GM18951 (cell line): ENCODE measurements at regions of chr6 and their contacts with region 1.

Region 1: DNA sequence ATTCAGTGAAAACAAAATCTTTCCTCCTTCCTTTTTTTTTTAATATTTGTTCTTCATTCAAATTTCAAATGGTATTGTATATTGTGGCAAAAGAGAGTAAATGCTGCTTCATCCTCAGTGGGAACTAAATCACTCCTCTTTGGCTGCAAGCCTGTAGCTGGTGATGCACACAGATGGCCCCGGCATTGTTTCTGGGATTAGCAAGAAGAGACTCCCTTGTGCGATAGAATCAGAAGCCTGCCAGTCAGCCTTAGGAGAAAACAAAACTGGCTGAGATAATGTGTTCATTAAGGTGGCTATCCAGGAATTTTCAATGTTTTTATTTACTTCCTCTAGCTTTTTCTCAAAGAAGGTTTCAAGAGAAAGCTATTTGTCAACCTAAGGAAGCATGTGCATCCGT is 20.7 kb upstream of the ELOVL2 start:
- POLR2A ChIP-seq: no peak

Region 2: GRCh38 chr6:10847684-10848083 is 217.2 kb before region 1 on chr6:
- in situ Hi-C with region 1: loop called (anchors 10 kb)
- POLR2A ChIP-seq: no peak

Region 3: GRCh38 chr6:10954590-10955010 is 110.2 kb before region 1 on chr6:
- in situ Hi-C with region 1: loop called (anchors 10 kb)
- POLR2A ChIP-seq: no peak

Region 4: GRCh38 chr6:11665604-11666326 is 600.9 kb after region 1 on chr6:
- in situ Hi-C with region 1: no loop called
- POLR2A ChIP-seq: no peak

Region 5: GRCh38 chr6:11766589-11767450 is 702.0 kb after region 1 on chr6:
- in situ Hi-C with region 1: no loop called
- POLR2A ChIP-seq: no peak